ENCODE measurements at regions of chr17 and their contacts with region 1.

Region 1: GRCh38 chr17:63445979-63446691 is at the start of gene CYB561:
- DNase-seq: peak; percentile 88
- ATAC-seq: peak; percentile 68
- H3K4me3 Mint-ChIP-seq: peak within 1 kb of the TSS; percentile 73
- H3K27ac Mint-ChIP-seq: peak within 1 kb of the TSS; percentile 78
- H3K4me1 Mint-ChIP-seq: peaks cover 17% of the 10 kb centered on the region
- H3K27me3 Mint-ChIP-seq: no peaks in the 10 kb centered on the region
- CTCF ChIP-seq: no peak
- total RNA-seq, gene CYB561: 18.9 and 19.9 TPM in 2 replicates

Region 2: GRCh38 chr17:63378411-63379375 is 67.4 kb before region 1 on chr17:
- CTCF ChIA-PET with region 1: no interaction called
- POLR2A ChIA-PET with region 1: no interaction called
- intact Hi-C with region 1: no loop called
- DNase-seq: no peak
- ATAC-seq: no peak
- H3K4me3 Mint-ChIP-seq: no peak overlapping the region
- H3K27ac Mint-ChIP-seq: no peak overlapping the region
- H3K4me1 Mint-ChIP-seq: no peaks in the 10 kb centered on the region
- H3K27me3 Mint-ChIP-seq: peaks cover 5% of the 10 kb centered on the region
- CTCF ChIP-seq: no peak

Region 3: DNA sequence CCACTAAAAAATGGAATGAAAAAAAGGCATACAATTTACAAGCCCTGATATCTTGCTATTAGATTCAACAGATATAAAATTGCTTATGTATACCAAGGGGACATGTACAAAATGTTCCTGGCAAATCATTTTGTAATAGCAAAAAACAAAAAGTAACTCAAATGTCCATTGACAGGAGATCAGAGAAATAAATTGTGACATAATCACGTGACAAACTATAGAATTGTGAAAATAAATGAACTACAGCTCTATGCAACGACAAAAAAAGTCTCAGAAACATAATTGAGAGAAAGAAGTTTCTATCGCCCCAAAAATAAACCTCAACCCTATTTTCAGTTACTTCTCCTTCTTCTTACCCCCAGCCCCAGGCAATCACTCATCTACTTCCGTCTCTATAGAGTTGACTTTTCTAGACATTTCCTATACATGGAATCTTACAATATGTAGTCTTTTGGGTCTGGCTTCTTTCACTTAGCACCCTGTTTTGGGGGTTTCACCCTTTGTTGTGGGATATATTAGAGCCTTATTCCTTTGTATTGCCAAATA is 18.6 kb after region 1 on chr17:
- CTCF ChIA-PET with region 1: no interaction called
- POLR2A ChIA-PET with region 1: interaction called, 17 read pairs
- intact Hi-C with region 1: loop called (anchors 1 kb)
- DNase-seq: no peak
- ATAC-seq: no peak
- H3K4me3 Mint-ChIP-seq: no peak overlapping the region
- H3K27ac Mint-ChIP-seq: peak overlapping the region; percentile 2
- H3K4me1 Mint-ChIP-seq: peaks cover 34% of the 10 kb centered on the region
- H3K27me3 Mint-ChIP-seq: peaks cover 2% of the 10 kb centered on the region
- CTCF ChIP-seq: no peak

Region 4: DNA sequence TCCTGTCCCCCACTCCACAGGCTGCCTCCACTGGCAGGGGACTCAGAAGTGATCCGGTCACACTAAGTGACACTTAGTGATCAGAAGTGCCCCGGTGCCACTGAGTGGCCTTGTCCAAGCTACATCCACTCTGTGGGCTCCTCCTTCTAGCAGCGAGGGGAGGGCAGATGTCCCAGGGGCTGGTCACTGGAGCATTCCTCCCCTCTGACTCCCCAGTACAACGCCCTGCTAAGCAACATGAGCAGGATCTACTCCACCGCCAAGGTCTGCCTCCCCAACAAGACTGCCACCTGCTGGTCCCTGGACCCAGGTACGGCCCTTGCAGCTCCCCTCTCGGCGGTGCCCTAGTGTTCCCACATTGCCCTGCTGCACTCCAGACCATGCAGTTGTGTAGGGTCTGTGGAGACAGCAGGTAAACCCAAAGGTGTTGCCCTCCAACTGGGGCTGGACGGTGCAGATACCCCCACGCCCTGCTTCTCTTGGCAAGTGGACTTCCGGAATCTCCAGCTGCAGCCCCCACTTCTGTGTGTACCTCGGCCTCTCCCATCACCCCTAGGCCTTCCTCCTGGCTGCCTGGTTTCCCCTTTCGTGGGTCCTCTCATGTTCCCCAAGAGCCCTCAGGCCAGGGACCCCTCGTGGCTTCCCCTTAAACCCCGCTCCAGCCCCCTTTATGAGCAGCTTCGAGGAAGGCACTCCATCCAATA is 32.8 kb after region 1 on chr17:
- CTCF ChIA-PET with region 1: interaction called, 26 read pairs
- POLR2A ChIA-PET with region 1: interaction called, 5 read pairs
- intact Hi-C with region 1: loop called (anchors 1 kb)
- DNase-seq: peak; percentile 59
- ATAC-seq: peak; percentile 80
- H3K4me3 Mint-ChIP-seq: peak overlapping the region; percentile 54
- H3K27ac Mint-ChIP-seq: no peak overlapping the region
- H3K4me1 Mint-ChIP-seq: peaks cover 17% of the 10 kb centered on the region
- H3K27me3 Mint-ChIP-seq: peaks cover 32% of the 10 kb centered on the region
- CTCF ChIP-seq: no peak

Region 5: DNA sequence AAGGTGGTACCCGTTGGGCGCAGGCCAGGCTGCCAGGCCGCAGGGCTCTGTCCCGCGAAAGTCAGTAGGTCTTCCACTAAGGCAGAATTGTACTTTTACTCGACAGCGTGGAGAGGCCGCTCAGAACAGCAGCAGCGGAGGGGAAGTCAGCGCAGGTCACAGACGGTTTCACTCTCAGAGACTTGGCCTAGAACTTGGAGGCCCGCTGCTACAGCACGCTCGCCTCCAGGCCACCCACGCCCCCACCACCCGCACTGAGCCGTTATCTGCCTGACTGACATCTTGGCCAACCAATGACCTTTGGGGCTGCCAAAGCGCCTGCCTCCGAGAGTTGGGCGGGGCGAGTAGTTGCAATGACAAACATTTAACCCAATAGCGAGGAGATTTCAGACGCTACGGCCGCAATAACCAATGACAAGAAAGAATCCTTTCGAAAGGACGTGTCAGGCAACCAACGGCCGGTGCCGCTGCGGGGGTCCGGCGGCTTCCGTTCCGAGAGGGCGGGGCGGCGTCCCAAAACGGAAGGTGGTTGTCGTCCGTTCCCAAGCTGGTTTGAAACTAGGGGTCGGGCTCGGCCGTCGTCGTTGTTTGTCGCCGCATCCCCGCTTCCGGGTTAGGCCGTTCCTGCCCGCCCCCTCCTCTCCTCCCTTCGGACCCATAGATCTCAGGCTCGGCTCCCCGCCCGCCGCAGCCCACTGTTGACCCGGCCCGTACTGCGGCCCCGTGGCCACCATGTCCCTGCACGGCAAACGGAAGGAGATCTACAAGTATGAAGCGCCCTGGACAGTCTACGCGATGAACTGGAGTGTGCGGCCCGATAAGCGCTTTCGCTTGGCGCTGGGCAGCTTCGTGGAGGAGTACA is 104.0 kb after region 1 on chr17 and contains the start of gene DCAF7:
- CTCF ChIA-PET with region 1: no interaction called
- POLR2A ChIA-PET with region 1: interaction called, 18 read pairs
- intact Hi-C with region 1: loop called (anchors 1 kb)
- DNase-seq: peak; percentile 94
- ATAC-seq: peak; percentile 94
- H3K4me3 Mint-ChIP-seq: peak within 1 kb of the TSS; percentile 99
- H3K27ac Mint-ChIP-seq: peak within 1 kb of the TSS; percentile 95
- H3K4me1 Mint-ChIP-seq: peaks cover 56% of the 10 kb centered on the region
- H3K27me3 Mint-ChIP-seq: no peaks in the 10 kb centered on the region
- CTCF ChIP-seq: no peak
- total RNA-seq, gene DCAF7: 91.9 and 103 TPM in 2 replicates

Region 6: DNA sequence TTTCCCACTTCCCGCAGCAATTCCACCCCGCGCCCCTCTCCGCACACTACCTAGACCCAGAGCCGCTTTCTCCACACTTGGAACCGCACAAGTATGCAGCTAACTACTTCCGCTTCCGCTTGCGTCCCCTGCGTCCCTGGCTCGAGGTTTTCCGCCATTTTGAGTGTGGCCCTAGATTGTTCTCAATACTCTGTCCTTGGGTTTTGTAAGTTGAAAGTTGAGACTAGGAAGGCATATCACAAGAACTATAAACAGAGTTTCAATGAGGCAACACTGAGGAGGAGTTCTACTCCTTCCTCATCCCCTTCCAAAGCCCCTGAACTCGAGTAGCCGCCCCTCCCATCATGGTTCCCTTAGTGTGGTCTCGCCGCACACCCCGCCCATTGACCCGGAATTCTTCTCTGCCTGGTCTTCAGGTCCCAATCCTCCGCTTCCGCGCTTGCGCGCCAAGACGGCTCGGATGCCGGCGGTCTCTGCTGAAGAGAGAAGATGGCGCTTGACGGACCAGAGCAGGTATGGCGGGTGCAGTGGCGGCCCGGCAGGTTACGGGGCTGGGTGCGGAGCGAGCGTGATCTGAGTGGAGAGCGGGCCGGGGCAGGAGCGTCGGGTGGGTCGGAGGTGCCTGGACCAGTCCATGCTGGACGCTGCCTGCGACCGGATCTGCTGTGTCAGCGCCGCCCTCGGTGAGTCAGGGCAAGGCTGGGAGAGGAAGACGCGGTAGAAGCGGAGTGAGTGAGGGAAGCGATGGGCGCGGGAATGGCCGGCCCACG is 381.1 kb after region 1 on chr17 and contains the starts of genes FTSJ3 and PSMC5:
- CTCF ChIA-PET with region 1: no interaction called
- POLR2A ChIA-PET with region 1: no interaction called
- intact Hi-C with region 1: loop called (anchors 2 kb)
- DNase-seq: peak; percentile 90
- ATAC-seq: peak; percentile 95
- H3K4me3 Mint-ChIP-seq: peak within 1 kb of the TSS; percentile 98
- H3K27ac Mint-ChIP-seq: peak within 1 kb of the TSS; percentile 100
- H3K4me1 Mint-ChIP-seq: peaks cover 75% of the 10 kb centered on the region
- H3K27me3 Mint-ChIP-seq: no peaks in the 10 kb centered on the region
- CTCF ChIP-seq: no peak
- total RNA-seq, gene FTSJ3: 82.0 and 85.1 TPM in 2 replicates
- total RNA-seq, gene PSMC5: 157 TPM in 2 replicates

Region 7: DNA sequence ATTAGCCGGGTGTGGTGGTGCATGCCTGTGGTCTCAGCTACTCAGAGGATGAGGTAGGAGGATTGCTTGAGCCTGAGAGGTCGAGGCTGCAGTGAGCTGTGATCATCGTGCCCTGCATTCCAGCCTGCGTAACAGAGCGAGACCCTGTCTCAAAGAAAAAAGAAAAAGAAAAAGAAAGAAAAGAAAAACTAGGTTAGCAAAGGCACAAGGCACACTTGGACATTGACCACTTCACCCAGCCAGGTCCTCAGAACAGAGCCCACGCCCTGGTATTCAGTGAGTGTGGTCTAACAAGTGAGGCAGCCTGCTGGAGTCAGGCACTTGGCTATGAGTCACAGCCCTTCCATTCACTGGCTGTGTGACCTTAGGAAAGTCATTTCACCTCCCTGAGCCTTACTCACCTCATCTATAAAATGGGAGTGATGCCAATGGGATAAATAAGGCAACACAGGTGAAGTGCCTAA is 1013.2 kb after region 1 on chr17:
- CTCF ChIA-PET with region 1: no interaction called
- POLR2A ChIA-PET with region 1: no interaction called
- intact Hi-C with region 1: loop called (anchors 10 kb)
- DNase-seq: no peak
- ATAC-seq: no peak
- H3K4me3 Mint-ChIP-seq: no peak overlapping the region
- H3K27ac Mint-ChIP-seq: no peak overlapping the region
- H3K4me1 Mint-ChIP-seq: peaks cover 47% of the 10 kb centered on the region
- H3K27me3 Mint-ChIP-seq: no peaks in the 10 kb centered on the region
- CTCF ChIP-seq: no peak

Measured in activated B cell treated with CpG ODN at 0.5 μM for 24 hours (primary cell).